ENCODE measurements at regions of chr7 and their contacts with region 1.

Region 1: DNA sequence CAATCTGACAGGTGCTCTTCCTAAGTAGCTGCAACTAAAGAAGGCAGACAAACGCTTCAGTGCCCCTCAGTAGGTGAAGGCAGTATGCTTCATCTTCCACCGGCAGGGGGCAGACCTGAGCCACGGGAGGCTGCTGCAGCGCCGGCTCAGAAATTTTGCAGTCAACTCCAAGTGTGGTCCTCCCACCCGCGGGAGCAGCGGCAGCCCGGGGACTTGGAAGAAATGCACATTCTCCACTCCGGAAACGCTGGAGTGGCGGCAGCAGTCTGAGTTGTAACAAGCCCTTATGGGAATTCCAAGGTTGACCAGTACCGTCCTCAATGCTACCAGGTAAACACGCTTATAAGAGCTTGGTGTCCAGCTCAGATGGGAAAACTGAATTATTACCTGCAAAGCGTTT is 3.4 kb downstream of the IGFBP3 start:
- DNase-seq: no peak
- H3K4me3 ChIP-seq: peak overlapping the region; percentile 27; the same call in 1 of the 2 replicates
- H3K27ac ChIP-seq: no peak overlapping the region
- H3K27me3 ChIP-seq: no peaks in the 10 kb centered on the region
- CTCF ChIP-seq: peak; percentile 96

Region 2: GRCh38 chr7:45657136-45657889 is 260.3 kb before region 1 on chr7:
- CTCF ChIA-PET with region 1: no interaction called
- POLR2A ChIA-PET with region 1: no interaction called
- DNase-seq: no peak
- H3K4me3 ChIP-seq: no peak overlapping the region
- H3K27ac ChIP-seq: no peak overlapping the region
- H3K27me3 ChIP-seq: peaks cover 15% of the 10 kb centered on the region
- CTCF ChIP-seq: no peak

Region 3: GRCh38 chr7:45890902-45891461 is 26.7 kb before region 1 on chr7:
- CTCF ChIA-PET with region 1: interaction called, 18 read pairs
- POLR2A ChIA-PET with region 1: interaction called, 3 read pairs
- DNase-seq: no peak
- H3K4me3 ChIP-seq: no peak overlapping the region
- H3K27ac ChIP-seq: no peak overlapping the region
- H3K27me3 ChIP-seq: peaks cover 13% of the 10 kb centered on the region
- CTCF ChIP-seq: peak; percentile 71

Region 4: GRCh38 chr7:46352004-46352954 is 434.6 kb after region 1 on chr7:
- CTCF ChIA-PET with region 1: interaction called, 167 read pairs
- POLR2A ChIA-PET with region 1: interaction called, 3 read pairs
- DNase-seq: peak; percentile 32
- H3K4me3 ChIP-seq: no peak overlapping the region
- H3K27ac ChIP-seq: no peak overlapping the region
- H3K27me3 ChIP-seq: no peaks in the 10 kb centered on the region
- CTCF ChIP-seq: peak; percentile 81

Region 5: GRCh38 chr7:47088329-47089067 is 1170.8 kb after region 1 on chr7:
- CTCF ChIA-PET with region 1: interaction called, 25 read pairs
- POLR2A ChIA-PET with region 1: no interaction called
- DNase-seq: no peak
- H3K4me3 ChIP-seq: no peak overlapping the region
- H3K27ac ChIP-seq: no peak overlapping the region
- H3K27me3 ChIP-seq: no peaks in the 10 kb centered on the region
- CTCF ChIP-seq: peak; percentile 91

Region 6: GRCh38 chr7:47179812-47180515 is 1262.3 kb after region 1 on chr7:
- CTCF ChIA-PET with region 1: interaction called, 47 read pairs
- POLR2A ChIA-PET with region 1: no interaction called
- DNase-seq: peak; percentile 38
- H3K4me3 ChIP-seq: no peak overlapping the region
- H3K27ac ChIP-seq: no peak overlapping the region
- H3K27me3 ChIP-seq: peaks cover 13% of the 10 kb centered on the region
- CTCF ChIP-seq: peak; percentile 97

Measured in AG04450 (cell line).